A549 (cell line): ENCODE measurements at regions of chr12 and their contacts with region 1.

Region 1: GRCh38 chr12:123043536-123044001 is 63.1 kb downstream of the ARL6IP4 start:
- DNase-seq: peak; percentile 77 to 83
- ATAC-seq: peak; percentile 93 to 94
- H3K4me3 ChIP-seq: no peak overlapping the region
- H3K27ac ChIP-seq: peak overlapping the region; percentile 41 to 79
- H3K4me1 ChIP-seq: peaks cover 24% of the 10 kb centered on the region
- CTCF ChIP-seq: peak; percentile 75
- EP300 ChIP-seq: no peak; a peak in 1 of 5 replicates
- POLR2A ChIP-seq: no peak
- RAD21 ChIP-seq: peak; percentile 97 to 98

Region 2: DNA sequence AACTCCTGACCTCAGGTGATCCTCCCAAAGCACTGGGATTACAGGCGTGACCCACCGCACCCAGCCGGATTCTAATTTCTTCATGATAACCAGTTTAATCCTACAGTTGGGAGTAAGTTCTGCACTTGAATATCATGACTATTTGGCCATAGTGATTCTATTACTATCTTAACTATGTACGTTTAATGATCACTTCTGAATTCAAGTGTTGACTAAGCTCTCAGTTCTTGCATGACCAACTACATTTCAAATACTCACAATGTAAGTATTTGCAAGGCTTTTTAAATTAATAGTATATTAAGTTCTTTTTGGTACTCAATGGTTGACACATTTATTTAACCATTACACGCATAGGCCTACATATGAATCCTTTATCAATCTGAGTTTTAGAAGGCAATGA is 759.9 kb before region 1 on chr12:
- CTCF ChIA-PET with region 1: no interaction called
- POLR2A ChIA-PET with region 1: no interaction called
- DNase-seq: no peak
- ATAC-seq: no peak
- H3K4me3 ChIP-seq: no peak overlapping the region
- H3K27ac ChIP-seq: no peak overlapping the region
- H3K4me1 ChIP-seq: peaks cover 10% of the 10 kb centered on the region; the same call in 2 of the 3 replicates
- CTCF ChIP-seq: no peak
- EP300 ChIP-seq: no peak
- POLR2A ChIP-seq: no peak
- RAD21 ChIP-seq: no peak

Region 3: GRCh38 chr12:122984612-122985337 is 58.8 kb before region 1 on chr12:
- CTCF ChIA-PET with region 1: no interaction called
- POLR2A ChIA-PET with region 1: no interaction called
- DNase-seq: no peak
- ATAC-seq: no peak
- H3K4me3 ChIP-seq: no peak overlapping the region
- H3K27ac ChIP-seq: 0 out of 6 replicates have a peak overlapping the region, but pooled peaks of 1 of the 2 experiments have one; percentile 11
- H3K4me1 ChIP-seq: peaks cover 11% of the 10 kb centered on the region
- CTCF ChIP-seq: no peak
- EP300 ChIP-seq: no peak
- POLR2A ChIP-seq: no peak
- RAD21 ChIP-seq: no peak

Region 4: GRCh38 chr12:123024819-123025391 is 18.7 kb before region 1 on chr12:
- CTCF ChIA-PET with region 1: interaction called, 26 read pairs
- POLR2A ChIA-PET with region 1: no interaction called
- DNase-seq: no peak
- ATAC-seq: peak in 1 of 2 experiments; percentile 23; a peak in 1 of 6 replicates
- H3K4me3 ChIP-seq: no peak overlapping the region
- H3K27ac ChIP-seq: no peak overlapping the region
- H3K4me1 ChIP-seq: peaks cover 23% of the 10 kb centered on the region
- CTCF ChIP-seq: no peak
- EP300 ChIP-seq: no peak
- POLR2A ChIP-seq: no peak
- RAD21 ChIP-seq: no peak

Region 5: GRCh38 chr12:123075646-123076171 is 32.1 kb after region 1 on chr12:
- CTCF ChIA-PET with region 1: interaction called, 36 read pairs
- POLR2A ChIA-PET with region 1: no interaction called
- DNase-seq: no peak
- ATAC-seq: no peak
- H3K4me3 ChIP-seq: no peak overlapping the region
- H3K27ac ChIP-seq: peak overlapping the region in 1 of 2 experiments; percentile 51; a peak in 1 of 6 replicates
- H3K4me1 ChIP-seq: peaks cover 19% of the 10 kb centered on the region; the same call in 2 of the 3 replicates
- CTCF ChIP-seq: no peak
- EP300 ChIP-seq: no peak
- POLR2A ChIP-seq: no peak
- RAD21 ChIP-seq: no peak

Region 6: DNA sequence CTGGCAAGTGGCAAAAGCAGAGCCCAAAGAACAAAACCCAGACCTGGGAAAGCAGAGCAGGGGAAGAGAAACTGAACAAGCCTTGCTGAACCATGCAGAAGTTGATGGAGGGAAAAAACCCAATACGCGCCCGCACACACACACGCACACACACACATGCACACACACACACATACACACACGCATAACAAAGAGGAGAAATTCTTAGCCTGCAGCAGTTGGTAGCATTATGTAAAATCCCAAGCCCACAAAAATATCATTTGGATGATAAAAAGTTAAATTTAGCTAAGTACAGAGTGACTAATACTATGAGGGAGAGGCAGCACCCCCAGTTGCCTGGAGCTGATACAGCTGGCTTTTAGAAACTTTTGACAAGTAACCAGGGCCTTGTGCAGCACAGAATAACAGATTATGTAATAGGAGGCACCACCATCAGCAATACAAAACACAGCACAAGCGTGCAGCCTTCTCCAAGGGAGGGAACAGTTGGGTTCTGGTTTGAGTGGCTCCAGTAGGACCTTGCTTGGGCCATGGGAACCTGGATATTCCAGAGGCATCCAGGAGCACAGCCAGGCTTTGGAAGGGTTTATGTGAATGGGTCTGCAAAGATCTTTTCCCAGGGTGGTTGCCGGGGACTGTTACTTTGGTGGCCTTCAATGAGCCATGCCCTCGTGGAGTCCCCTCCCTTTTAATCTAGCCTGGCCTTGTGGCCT is 72.0 kb after region 1 on chr12:
- CTCF ChIA-PET with region 1: interaction called, 13 read pairs
- POLR2A ChIA-PET with region 1: no interaction called
- DNase-seq: no peak
- ATAC-seq: peak in 1 of 2 experiments; percentile 41; a peak in 2 of 6 replicates
- H3K4me3 ChIP-seq: no peak overlapping the region
- H3K27ac ChIP-seq: peak overlapping the region in 1 of 2 experiments; percentile 64; a peak in 2 of 6 replicates
- H3K4me1 ChIP-seq: peaks cover 15% of the 10 kb centered on the region
- CTCF ChIP-seq: no peak
- EP300 ChIP-seq: no peak
- POLR2A ChIP-seq: no peak
- RAD21 ChIP-seq: no peak

Region 7: GRCh38 chr12:123141615-123142517 is 98.3 kb after region 1 on chr12:
- CTCF ChIA-PET with region 1: interaction called, 48 read pairs
- POLR2A ChIA-PET with region 1: no interaction called
- DNase-seq: peak in 1 of 2 experiments; percentile 80
- ATAC-seq: peak; percentile 79 to 86
- H3K4me3 ChIP-seq: peak overlapping the region; percentile 10; the same call in 1 of the 3 replicates
- H3K27ac ChIP-seq: peak overlapping the region; percentile 89 to 91
- H3K4me1 ChIP-seq: peaks cover 51% of the 10 kb centered on the region
- CTCF ChIP-seq: no peak
- EP300 ChIP-seq: peak in 1 of 2 experiments; percentile 66; a peak in 2 of 5 replicates
- POLR2A ChIP-seq: no peak
- RAD21 ChIP-seq: peak in 1 of 2 experiments; percentile 30; a peak in 2 of 5 replicates

Region 8: DNA sequence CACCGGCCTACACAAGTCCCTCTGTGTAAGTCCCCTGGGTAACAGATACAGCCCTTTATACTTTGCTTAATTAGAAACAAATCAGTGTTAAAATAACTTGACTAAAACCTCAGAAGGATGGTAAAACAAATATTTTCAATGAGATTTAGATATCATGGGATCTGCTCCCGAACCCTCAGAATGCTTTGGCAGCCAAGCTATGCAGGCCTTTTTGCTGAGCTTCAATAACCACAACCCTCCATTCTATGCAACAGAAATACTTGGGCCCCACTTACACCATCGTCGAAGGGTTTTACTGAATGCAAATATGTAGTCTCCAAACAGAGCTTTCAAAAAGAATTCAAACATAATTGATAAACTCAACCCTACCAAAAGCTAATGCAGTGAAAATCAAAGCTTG is 136.6 kb after region 1 on chr12:
- CTCF ChIA-PET with region 1: interaction called, 12 read pairs
- POLR2A ChIA-PET with region 1: no interaction called
- DNase-seq: no peak
- ATAC-seq: no peak
- H3K4me3 ChIP-seq: no peak overlapping the region
- H3K27ac ChIP-seq: no peak overlapping the region
- H3K4me1 ChIP-seq: no peaks in the 10 kb centered on the region
- CTCF ChIP-seq: no peak
- EP300 ChIP-seq: no peak
- POLR2A ChIP-seq: no peak
- RAD21 ChIP-seq: no peak